ENCODE measurements at regions of chr3 and their contacts with region 1.

Region 1: GRCh38 chr3:178170698-178171535 is 365.3 kb upstream of the KCNMB2 start:
- DNase-seq: no peak
- ATAC-seq: peak; percentile 92

Region 2: GRCh38 chr3:177934001-177934891 is 236.7 kb before region 1 on chr3:
- intact Hi-C with region 1: loop called (anchors 5 kb)
- DNase-seq: no peak
- ATAC-seq: no peak

Region 3: GRCh38 chr3:178203165-178203564 is 32.2 kb after region 1 on chr3:
- intact Hi-C with region 1: no loop called
- DNase-seq: no peak
- ATAC-seq: peak; percentile 70